ENCODE measurements at regions of chr1 and their contacts with region 1.

Region 1: DNA sequence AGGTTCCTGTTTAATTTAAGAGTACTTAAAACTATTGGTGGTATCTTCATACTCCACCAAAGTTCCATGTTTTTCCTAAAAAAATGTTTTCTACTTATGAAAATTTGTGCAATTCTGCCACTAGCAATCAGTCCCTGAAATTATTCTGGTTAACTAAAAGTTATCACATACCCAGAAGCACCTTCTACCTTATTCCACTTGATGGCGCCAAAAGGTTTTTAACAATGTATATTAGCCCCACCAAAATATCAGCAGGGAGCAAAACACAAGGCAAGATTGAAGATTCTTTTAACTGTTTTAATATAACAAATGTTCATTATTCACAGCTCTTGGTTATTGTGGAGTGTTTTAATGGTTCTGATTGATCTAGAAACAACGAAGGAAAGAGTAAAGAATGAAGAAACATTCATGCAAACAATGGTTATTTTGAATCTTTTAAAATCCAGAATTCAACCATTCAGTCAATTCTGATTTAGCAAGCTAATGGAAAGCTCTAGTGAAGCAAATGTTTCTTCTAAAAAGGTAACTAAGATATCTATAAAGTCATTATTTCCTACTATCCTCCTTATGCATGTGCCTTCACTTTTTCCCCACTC is 67.2 kb downstream of the TTLL7 start:
- DNase-seq: peak in 1 of 2 donors; percentile 79
- H3K4me3 ChIP-seq: no peak overlapping the region
- H3K27ac ChIP-seq: no peak overlapping the region
- H3K4me1 ChIP-seq: peaks cover 0 to 22% (median 7%) of the 10 kb centered on the region in 4 donors
- H3K27me3 ChIP-seq: no peaks in the 10 kb centered on the region
- CTCF ChIP-seq: peak in 5 of 7 experiments; percentile 57 to 68 (median 63)
- EP300 ChIP-seq: no peak
- POLR2A ChIP-seq: no peak

Region 2: GRCh38 chr1:83791821-83792437 is 139.8 kb before region 1 on chr1:
- intact Hi-C with region 1: no loop called
- DNase-seq: no peak
- H3K4me3 ChIP-seq: no peak overlapping the region
- H3K27ac ChIP-seq: no peak overlapping the region
- H3K4me1 ChIP-seq: no peaks in the 10 kb centered on the region
- H3K27me3 ChIP-seq: no peaks in the 10 kb centered on the region
- CTCF ChIP-seq: no peak
- EP300 ChIP-seq: no peak
- POLR2A ChIP-seq: no peak

Region 3: DNA sequence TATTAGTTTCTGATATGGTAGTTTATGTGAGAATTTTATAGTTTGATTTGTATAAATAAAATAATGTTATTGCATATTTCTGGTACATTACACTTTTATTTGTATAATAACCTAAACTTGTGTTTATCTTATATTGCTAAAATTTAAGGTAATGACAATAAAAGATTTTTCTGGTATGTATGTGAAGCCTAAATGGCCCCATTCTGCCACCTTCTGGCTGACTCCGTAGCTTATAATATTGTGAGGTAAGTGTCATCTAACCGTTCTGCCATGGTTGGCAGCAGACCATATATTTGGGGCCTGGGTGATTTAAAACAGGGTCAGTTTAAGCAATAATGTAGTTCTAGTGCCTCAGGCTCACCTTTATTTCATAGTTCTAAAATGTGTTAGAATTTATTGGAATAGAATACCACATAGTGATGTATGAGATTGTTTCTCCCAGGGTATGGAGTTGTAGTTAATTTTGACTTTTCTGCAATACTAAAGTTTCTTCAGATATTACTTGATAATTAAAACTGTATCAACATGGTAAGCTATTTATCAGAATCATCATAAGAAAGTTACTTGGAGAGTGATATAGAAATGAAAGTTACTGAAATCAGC is 191.1 kb after region 1 on chr1:
- intact Hi-C with region 1: loop called (anchors 5 kb)
- DNase-seq: peak; percentile 59 to 76
- H3K4me3 ChIP-seq: no peak overlapping the region
- H3K27ac ChIP-seq: no peak overlapping the region
- H3K4me1 ChIP-seq: peaks cover 0 to 7% (median 2%) of the 10 kb centered on the region in 4 donors
- H3K27me3 ChIP-seq: no peaks in the 10 kb centered on the region
- CTCF ChIP-seq: peak in 5 of 7 experiments; percentile 18 to 64 (median 48)
- EP300 ChIP-seq: no peak
- POLR2A ChIP-seq: no peak

Measured in stomach (tissue), 19 donors.